Posterior cingulate gyrus (tissue), 11 donors: ENCODE measurements at regions of chr2 and their contacts with region 1.

Region 1: DNA sequence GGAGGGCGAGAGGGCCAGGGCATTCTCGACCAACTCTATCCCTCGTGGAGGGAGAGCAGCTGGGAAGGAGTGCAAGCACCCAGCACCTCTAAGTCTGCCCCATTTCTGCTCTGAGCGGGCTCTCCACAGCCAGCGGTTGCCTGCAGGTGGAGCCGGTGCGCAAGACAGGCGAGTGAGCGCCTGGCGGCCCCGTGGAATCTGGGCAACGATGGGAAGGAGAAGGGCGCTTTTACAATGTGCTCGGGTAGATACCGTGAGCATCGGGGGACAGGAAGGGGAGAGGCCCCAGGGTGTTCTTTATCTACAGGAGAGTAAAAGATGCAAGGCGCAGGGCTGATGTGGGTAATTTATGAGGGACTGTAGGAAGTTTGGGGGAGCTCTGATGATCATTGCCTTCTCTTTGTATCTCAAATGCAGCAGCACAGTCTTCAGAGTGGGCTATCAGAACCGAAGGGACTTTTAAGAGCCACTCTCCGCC is 867 bp upstream of the TTL start:
- DNase-seq: peak; percentile 82 to 98 (median 88)

Region 2: DNA sequence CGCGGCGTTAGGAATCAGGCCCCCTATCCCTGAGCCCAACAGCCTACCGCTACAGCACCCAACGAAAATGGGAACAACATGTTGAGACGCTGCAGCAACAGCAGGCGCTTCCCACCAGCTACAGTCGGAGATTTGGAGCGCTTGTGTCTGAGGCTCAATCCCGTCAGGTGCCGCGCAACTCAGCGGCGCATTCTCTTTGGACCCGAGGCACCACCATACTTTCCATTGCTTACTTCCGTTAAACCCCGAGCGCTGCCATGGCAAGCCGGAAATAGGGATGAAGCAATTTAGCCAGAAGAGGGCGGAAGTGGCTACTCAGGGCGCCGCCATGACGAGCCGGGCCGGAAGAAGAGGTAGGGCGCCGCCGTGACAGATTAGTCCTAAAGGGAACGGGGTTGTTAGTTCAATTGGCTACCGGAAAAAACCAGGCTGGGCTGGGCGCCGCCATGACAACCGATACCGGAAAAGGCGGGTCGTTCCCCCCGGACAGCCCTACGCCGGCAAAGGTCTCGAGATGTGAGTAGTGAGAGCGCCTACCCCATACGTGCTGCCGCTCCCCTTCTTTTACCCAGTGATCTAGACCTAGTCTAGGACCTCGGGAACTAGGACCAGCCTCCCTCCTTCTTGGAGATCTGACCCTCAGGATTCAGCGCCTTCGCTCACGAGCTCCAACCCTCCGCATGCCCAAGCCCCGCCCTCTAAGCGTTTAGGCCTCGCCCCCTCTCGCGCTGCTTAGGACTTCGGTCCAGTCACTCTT is 103.2 kb after region 1 on chr2 and contains the start of gene CHCHD5:
- intact Hi-C with region 1: loop called (anchors 1 kb)
- DNase-seq: peak; percentile 90 to 99 (median 96)

Region 3: DNA sequence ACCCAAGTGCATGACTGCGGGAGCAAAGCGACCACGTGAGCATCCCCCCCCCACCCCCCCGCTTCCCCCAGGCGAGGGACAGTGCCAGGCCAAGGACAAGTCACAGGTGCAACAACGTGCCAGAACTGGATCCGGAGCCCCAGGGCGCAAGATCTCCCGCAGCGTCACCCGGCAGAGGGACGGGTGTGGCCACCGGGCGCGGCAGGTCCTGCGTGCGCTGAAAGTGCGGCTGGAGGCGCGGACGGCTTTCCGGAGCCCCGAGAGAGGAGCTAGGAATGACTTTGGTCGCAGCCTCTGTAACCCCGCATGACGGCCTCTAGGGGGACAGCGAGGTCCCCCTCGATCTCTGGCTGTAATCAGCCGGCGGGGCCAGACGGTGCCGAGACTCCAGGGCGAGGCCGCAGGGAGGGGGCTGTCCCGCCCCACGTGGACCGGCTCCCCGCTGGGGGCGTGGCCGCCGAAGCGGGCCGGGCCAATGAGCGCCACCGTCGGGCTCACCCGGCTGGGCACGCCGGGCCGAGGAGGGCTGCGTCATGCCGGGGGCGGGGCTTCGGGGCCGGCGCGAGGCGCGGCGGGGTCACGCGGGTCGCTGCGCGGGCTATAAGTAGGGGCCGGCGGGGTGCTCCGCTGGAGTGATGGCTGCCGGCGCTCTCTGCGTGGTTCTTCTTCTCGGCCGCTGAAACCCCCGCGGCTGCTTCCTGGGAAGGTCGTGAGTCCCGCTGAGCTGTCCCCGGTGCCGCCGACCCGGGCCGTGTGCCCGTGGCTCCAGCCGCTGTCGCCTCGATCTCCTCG is 164.4 kb after region 1 on chr2 and contains the start of gene SLC20A1:
- intact Hi-C with region 1: loop called (anchors 10 kb)
- DNase-seq: peak; percentile 96 to 100 (median 98)

Region 4: DNA sequence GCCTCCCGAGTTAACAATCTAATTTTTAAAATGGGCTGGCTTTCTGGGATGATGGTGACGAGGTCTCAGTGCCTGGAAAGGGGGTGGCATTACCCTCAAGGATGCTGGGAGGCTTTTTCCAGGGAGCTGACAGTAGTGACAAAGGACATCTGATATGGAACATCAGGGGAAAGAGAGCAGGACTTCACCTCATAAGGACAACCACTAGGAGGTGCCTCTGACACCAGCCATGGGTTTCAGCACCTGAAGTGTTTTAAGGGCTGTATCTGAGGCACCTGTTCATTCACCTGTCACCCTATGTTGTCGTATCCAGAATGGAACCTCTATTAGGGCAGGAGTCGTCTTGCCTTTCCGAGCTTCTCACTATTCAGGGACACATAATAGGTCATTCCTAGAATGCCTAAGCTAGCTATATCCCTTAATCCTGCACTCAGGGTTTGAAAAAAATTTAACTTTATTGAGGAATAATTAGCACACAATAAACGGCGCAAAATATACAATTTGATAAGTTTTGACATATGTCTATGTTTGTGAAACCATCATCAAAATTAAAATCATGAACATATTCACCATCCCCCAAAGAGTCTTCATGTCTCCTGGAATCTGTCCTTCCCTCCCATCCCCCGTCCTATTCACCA is 560.9 kb after region 1 on chr2:
- intact Hi-C with region 1: no loop called
- DNase-seq: no peak